WTC11 (cell line): ENCODE measurements at regions of chr11 and their contacts with region 1.

Region 1: DNA sequence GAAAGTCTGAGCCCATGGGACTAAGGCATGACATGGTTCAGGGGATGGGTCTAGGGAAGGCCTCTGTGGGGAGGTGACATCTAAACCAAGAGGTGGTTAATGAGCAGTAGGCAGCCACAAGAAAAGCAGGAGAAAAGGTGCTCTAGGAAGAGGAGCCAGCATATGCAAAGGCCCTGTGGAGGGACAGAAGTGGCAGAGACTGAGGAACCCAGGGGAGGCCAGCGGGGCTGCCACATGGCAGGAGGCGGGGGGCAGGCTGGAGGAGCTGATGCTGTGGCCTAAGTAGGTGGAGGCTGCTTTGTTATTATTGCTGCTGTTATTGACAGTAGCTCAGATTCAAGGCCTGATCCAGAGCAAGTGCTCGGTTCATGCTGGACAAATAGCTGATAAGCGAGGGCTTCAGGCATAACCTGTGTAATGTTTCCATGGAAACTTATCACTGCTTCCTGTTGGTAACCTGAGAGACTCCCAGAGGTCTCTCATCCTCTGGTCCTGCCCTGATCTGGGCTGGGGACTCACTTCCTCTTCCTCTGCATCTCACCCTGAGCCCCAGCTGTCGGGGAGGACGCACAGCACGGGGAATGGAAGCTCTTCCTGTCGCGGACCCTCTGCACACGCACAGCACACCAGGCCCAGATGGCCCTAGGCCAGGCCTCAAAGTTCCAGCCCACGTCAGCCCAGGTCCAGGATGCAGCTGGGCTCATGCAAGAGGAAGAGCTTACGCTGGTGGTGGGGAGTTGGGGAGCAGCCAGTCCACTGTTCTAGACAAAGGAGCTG is 75.2 kb upstream of the TP53I11 start:
- DNase-seq: no peak
- ATAC-seq: peak; percentile 43
- H3K4me3 Mint-ChIP-seq: no peak overlapping the region
- H3K27ac Mint-ChIP-seq: no peak overlapping the region
- H3K4me1 Mint-ChIP-seq: peaks cover 16% of the 10 kb centered on the region
- H3K27me3 Mint-ChIP-seq: no peaks in the 10 kb centered on the region; the same call in 1 of the 2 replicates
- CTCF ChIP-seq: no peak

Region 2: DNA sequence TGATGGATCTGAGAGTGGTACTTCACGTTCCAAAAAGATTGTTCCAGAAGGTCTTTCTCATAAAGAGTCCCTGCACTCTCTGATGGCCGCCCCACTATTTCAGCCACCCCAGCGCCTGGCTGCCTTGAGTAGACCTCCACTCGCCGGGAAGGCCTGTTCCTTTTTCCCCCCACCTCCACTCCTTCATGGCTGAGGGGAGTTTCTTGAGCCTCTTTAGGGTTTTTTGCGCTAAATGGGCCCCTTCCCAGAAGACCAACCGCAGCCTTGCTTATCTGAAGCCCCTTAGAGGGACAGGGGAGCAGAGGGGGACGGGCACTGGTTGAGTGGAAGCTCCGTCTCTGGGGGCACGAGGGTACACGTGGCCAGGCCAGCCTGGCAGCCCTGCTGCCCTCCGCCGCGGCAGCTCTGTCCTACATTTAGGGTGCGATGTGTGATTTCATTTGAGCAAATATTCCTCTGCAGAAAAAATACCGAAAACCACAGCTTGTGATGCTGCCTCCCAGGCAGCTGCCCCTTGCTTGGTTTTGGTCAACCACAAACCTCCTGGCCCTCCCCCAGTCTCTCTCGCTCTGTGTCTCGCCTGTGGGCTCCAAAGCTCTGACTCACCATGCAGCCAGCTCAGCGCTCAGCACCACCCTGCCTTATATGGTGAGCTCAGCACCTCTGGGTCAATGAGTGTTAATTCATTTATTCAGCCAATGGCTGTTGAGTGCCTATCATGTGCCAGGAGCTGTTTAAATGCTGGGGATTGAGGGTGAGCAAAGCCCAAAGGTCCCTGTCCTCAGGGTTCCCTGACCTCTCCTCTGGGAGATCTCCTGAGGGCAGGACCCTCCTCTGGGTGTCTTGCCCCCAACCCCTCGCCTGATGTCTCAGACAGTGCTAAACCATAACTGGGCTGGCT is 163.8 kb before region 1 on chr11:
- CTCF ChIA-PET with region 1: no interaction called
- POLR2A ChIA-PET with region 1: no interaction called
- DNase-seq: peak; percentile 52
- ATAC-seq: peak; percentile 84
- H3K4me3 Mint-ChIP-seq: no peak overlapping the region
- H3K27ac Mint-ChIP-seq: peak overlapping the region; percentile 17
- H3K4me1 Mint-ChIP-seq: peaks cover 75% of the 10 kb centered on the region
- H3K27me3 Mint-ChIP-seq: no peaks in the 10 kb centered on the region
- CTCF ChIP-seq: no peak

Region 3: GRCh38 chr11:44964526-44965209 is 61.2 kb before region 1 on chr11:
- CTCF ChIA-PET with region 1: interaction called, 10 read pairs
- POLR2A ChIA-PET with region 1: no interaction called
- DNase-seq: no peak
- ATAC-seq: peak; percentile 27
- H3K4me3 Mint-ChIP-seq: no peak overlapping the region
- H3K27ac Mint-ChIP-seq: 0 out of 2 replicates have a peak overlapping the region, but pooled peaks have one; percentile 49
- H3K4me1 Mint-ChIP-seq: peaks cover 53% of the 10 kb centered on the region
- H3K27me3 Mint-ChIP-seq: no peaks in the 10 kb centered on the region
- CTCF ChIP-seq: no peak